H1 (cell line): ENCODE measurements at regions of chr12 and their contacts with region 1.

Region 1: DNA sequence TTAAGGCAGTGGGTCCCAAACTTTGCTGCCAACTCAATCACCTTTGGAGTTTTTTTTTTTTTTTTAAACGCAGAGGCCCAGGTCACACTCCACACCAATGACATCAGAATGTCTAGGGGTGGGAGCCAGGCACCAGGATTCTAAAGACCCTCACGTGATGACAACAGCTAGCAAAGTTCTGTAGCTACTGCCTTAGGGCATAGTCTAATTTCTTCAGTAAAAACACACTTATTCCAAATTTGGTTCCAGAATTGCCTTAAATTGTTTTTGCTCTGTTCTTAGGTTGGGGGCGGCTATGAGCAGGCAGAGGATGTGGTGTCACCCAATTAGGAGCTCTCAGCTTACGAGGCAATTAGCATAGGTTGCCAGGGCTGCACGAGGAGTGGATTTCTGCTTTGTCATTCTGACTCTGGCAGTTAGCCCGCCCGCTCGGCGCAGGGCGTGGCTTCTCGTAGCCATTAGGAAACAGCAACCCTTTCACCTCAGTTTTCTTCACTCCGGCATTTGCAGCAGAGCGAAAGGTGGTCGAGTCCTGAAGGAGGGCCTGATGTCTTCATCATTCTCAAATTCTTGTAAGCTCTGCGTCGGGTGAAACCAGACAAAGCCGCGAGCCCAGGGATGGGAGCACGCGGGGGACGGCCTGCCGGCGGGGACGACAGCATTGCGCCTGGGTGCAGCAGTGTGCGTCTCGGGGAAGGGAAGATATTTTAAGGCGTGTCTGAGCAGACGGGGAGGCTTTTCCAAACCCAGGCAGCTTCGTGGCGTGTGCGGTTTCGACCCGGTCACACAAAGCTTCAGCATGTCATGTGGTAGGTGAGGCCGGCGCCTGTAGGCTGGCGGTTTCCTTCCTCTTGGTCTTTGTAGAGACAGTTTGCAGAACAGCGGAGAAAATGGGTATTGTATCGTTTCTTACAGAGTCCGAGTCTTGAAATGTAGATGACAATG is 16.7 kb upstream of the EID3 start:
- DNase-seq: peak; percentile 87 to 90
- H3K4me3 ChIP-seq: peak overlapping the region; percentile 75 to 98 (median 90)
- H3K27ac ChIP-seq: peak overlapping the region; percentile 91
- H3K4me1 ChIP-seq: peaks cover 3 to 14% (median 4%) of the 10 kb centered on the region in 4 experiments; a peak in 6 of 7 replicates
- H3K27me3 ChIP-seq: no peaks in the 10 kb centered on the region
- CTCF ChIP-seq: no peak
- EP300 ChIP-seq: no peak
- POLR2A ChIP-seq: peak; percentile 83 to 94
- RAD21 ChIP-seq: no peak

Region 2: DNA sequence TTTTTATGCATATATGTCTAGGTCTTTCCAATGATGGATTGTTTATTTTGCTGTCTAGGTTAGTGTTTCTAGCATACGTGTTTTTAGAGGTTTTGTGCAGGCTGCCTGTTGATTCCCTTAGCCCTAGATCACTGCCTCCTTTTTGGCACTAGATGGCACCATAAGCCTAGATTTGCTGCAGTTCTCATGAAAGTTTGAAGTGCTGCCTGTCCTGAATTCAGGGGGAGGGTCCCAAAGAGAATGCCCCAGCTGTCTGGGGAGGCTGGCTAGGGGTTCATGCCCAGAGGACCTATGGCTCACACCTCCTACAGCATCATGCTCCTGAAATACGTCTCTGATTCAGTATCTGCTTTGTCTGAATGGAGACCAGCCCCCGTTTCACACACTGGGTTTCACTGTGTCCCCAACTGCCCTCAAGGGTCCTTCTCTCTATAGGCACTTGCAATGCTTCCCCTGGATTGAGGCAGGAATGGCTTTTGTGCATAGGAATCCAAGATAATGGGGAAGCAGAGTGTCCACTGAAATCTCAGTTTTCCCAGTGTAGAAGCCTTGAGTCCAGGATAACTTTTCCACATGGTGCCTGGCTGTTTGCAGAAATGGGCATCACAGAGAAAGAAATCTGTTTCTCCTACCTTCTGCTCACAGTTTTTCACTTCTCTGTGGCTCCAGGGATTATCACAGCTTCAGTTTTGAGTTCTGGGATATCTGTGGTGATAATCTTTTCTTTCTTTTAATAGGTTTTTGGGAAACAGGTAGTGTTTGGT is 85.4 kb before region 1 on chr12:
- CTCF ChIA-PET with region 1: interaction called, 75 read pairs
- POLR2A ChIA-PET with region 1: interaction called, 4 read pairs
- DNase-seq: peak in 1 of 2 experiments; percentile 69
- H3K4me3 ChIP-seq: no peak overlapping the region
- H3K27ac ChIP-seq: no peak overlapping the region
- H3K4me1 ChIP-seq: peaks cover 0 to 4% (median 0%) of the 10 kb centered on the region in 4 experiments; a peak in 1 of 7 replicates
- H3K27me3 ChIP-seq: no peaks in the 10 kb centered on the region
- CTCF ChIP-seq: peak; percentile 4 to 95 (median 80)
- EP300 ChIP-seq: no peak
- POLR2A ChIP-seq: no peak
- RAD21 ChIP-seq: peak; percentile 99

Region 3: GRCh38 chr12:104230304-104231095 is 56.3 kb before region 1 on chr12:
- CTCF ChIA-PET with region 1: interaction called, 12 read pairs
- POLR2A ChIA-PET with region 1: interaction called, 15 read pairs
- DNase-seq: peak in 1 of 2 experiments; percentile 54
- H3K4me3 ChIP-seq: no peak overlapping the region
- H3K27ac ChIP-seq: no peak overlapping the region
- H3K4me1 ChIP-seq: no peaks in the 10 kb centered on the region; a peak in 1 of 7 replicates
- H3K27me3 ChIP-seq: no peaks in the 10 kb centered on the region
- CTCF ChIP-seq: no peak
- EP300 ChIP-seq: no peak
- POLR2A ChIP-seq: no peak
- RAD21 ChIP-seq: no peak

Region 4: DNA sequence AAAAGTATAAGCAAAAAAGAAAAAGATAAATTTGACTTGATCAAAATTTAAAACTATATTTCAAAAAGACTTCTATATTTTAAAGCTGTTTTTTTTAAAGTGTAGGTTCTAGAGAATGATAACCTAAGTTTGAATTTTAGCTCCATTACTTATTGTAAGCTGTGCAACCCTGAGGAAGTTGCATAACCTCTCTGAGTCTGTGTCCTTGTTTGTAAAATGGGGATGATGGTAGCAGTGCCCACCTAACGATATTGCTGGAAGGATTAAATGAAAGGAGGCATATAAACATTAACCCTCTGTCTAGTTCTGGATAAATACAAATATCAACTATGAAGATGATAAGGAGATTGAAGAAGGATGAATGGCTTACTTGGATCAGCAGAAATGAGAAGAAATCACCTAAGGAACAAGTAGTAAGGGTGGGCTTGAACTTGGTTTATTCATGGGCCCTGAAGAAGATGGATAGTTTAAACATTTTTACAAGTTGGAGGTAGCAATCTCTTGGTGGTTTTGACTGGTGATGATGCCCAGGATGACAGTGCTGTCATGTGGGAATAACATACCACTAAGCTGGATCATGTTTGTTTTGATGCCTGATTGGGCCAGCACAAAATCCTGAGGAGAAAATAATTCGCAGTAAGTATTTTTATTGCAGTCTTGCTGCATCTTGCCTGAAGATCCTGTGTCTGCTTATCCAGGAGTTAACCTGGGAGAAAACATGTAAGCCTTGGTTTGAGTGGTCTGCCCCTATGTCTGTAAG is 36.3 kb before region 1 on chr12:
- CTCF ChIA-PET with region 1: interaction called, 3 read pairs
- POLR2A ChIA-PET with region 1: interaction called, 22 read pairs
- DNase-seq: no peak
- H3K4me3 ChIP-seq: no peak overlapping the region
- H3K27ac ChIP-seq: no peak overlapping the region
- H3K4me1 ChIP-seq: no peaks in the 10 kb centered on the region
- H3K27me3 ChIP-seq: no peaks in the 10 kb centered on the region
- CTCF ChIP-seq: no peak
- EP300 ChIP-seq: no peak
- POLR2A ChIP-seq: no peak
- RAD21 ChIP-seq: no peak

Region 5: GRCh38 chr12:104303538-104304151 is 16.8 kb after region 1 on chr12 and contains the start of gene EID3:
- CTCF ChIA-PET with region 1: interaction called, 6 read pairs
- POLR2A ChIA-PET with region 1: interaction called, 37 read pairs
- DNase-seq: peak in 1 of 2 experiments; percentile 95
- H3K4me3 ChIP-seq: peak within 1 kb of the TSS; percentile 41 to 59 (median 50)
- H3K27ac ChIP-seq: peak within 1 kb of the TSS; percentile 56
- H3K4me1 ChIP-seq: peaks cover 7 to 15% (median 8%) of the 10 kb centered on the region in 4 experiments
- H3K27me3 ChIP-seq: no peaks in the 10 kb centered on the region; a peak in 1 of 7 replicates
- CTCF ChIP-seq: no peak
- EP300 ChIP-seq: no peak
- POLR2A ChIP-seq: peak in 1 of 2 experiments; percentile 24; a peak in 1 of 3 replicates
- RAD21 ChIP-seq: no peak
- total RNA-seq, gene EID3: 2.2 and 2.8 TPM in 2 replicates